ENCODE measurements at regions of chr16 and their contacts with region 1.

Region 1: DNA sequence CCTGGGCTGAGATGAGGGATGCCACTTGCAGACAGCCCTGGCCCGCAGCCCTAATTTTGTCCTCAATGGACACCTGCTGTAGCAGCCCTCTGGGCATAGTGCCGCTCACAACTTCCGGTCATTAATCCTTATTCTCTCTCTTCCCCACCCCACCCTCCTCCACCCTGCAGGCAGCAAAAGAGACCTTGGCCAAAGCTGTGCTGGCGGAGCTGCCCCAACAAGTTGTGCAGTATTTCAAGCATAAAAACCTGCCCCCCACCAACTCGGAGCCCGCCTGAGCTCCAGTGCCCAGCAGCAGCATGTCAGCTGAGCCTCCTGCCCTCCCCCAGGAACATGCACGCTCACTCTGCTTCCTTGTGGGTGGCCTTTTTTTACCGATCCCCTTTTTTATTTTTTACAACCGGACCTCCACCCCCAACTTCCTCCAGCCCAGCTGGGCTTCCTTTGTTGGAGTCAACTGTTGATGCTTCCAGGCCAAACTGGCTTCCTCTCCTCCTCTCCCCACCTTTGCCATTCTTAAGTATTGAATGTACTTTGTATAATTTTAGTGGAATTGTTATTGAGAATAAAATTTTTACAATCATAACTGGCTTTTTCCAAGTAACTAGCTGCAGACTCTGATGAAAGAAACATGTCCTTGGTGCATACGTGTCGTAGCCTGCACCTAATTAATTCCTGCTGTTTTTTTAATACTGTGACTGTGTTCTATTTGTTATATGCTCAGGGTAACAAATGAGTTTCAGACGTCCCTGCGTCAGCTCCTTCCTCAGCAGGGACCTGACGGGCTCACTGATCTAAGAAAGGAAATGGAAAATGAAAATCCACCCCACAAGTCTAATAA is 38.2 kb downstream of the PSME3IP1 start:
- DNase-seq: peak in 6 of 10 donors; percentile 30 to 84 (median 66)

Region 2: GRCh38 chr16:57115514-57116182 is 32.0 kb before region 1 on chr16:
- intact Hi-C with region 1: loop called (anchors 1 kb)
- DNase-seq: peak; percentile 70 to 98 (median 84)

Region 3: DNA sequence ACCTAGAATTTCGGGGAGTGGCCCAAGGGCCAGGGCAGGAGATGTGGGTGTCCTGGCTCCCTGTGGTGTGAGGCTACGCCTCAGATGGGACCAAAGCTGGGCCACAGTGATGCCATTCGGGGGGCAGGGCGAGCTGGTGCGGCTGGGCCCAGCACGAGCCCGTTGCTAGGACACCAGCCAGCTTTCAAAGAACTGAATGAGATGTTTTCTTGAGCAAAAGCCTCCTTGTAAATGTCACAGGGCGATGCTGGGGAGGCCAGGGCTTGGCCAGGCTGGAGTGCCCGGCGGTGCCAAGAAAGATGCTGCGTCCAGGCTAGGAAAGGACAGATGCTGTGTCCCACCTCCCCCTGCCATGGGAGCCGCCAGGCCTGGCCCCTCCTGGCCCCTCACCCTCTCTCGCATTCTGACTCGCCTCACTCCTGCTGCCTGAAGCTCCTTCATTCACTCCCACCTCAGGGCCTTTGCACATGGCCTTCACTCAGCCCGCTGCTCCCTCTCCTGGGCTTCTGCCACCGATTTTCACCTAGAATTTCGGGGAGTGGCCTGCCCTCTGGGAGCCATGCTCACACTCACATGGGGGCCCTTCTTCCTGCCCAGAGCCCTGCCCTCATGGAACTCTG is 16.1 kb before region 1 on chr16:
- intact Hi-C with region 1: loop called (anchors 1 kb)
- DNase-seq: peak; percentile 64 to 96 (median 76)

Region 4: DNA sequence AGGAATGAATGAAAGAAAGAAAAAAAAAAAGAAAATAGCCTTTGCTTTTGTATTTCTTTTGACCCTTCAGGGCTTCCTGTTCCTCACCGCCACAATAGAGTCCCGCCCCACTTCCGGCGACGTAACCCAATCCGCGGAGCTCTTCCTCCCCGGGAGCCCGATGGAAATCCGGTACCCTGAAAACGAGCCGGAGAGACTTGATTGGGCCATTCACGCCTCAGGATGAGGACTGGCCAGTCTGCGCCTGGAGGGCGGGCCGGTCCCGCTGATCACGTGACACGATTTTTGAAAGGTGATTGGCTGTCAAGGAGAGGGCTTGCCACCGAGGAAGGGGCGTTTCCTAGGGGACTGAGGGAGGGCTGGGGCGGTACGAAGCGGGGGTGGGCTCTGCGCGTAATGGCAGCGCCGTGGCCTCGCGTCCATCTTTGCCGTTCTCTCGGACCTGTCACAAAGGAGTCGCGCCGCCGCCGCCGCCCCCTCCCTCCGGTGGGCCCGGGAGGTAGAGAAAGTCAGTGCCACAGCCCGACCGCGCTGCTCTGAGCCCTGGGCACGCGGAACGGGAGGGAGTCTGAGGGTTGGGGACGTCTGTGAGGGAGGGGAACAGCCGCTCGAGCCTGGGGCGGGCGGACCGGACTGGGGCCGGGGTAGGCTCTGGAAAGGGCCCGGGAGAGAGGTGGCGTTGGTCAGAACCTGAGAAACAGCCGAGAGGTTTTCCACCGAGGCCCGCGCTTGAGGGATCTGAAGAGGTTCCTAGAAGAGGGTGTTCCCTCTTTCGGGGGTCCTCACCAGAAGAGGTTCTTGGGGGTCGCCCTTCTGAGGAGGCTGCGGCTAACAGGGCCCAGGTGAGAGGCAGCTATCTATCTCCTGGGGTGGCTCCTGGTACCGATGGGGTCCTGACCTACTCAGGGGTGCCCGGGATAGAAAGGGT is 38.6 kb after region 1 on chr16 and contains the starts of genes PSME3IP1 and RSPRY1:
- intact Hi-C with region 1: no loop called
- DNase-seq: peak; percentile 97 to 100 (median 99)

Region 5: GRCh38 chr16:58077853-58078252 is 930.3 kb after region 1 on chr16:
- intact Hi-C with region 1: no loop called
- DNase-seq: peak in 2 of 10 donors; percentile 12 to 29

Measured in posterior cingulate gyrus (tissue), 11 donors.